HEK293 (cell line): ENCODE measurements at regions of chr19 and their contacts with region 1.

Region 1: DNA sequence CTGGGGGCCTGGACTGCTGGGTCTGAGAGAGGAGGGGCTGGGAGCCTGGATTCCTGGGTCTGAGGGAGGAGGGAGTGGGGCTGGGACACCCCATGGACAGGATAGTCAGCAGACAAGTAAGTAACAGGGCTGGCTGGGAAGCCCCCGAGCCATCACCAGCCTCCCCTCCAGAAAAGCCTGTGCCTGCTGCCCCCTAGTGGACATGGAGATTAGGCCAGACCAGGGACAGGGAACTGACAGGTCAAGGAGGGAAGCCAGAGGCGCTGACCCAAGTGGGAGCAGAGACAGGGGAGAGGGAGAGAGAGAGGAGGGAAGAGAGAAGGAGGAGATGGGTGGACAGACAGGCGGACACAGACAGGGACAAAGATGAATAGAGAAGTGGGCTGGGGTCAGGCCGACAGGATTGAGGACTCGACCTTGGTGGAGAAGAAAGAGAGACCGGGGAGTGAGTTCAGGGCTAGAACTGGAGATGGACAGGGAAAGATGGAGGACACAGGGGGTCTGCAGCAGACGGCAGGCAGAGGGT is 6.7 kb upstream of the ERFL start:
- H3K4me3 ChIP-seq: no peak overlapping the region
- H3K27ac ChIP-seq: no peak overlapping the region
- H3K4me1 ChIP-seq: peaks cover 7% of the 10 kb centered on the region
- CTCF ChIP-seq: peak; percentile 96

Region 2: GRCh38 chr19:41951686-41952172 is 16.8 kb after region 1 on chr19:
- CTCF ChIA-PET with region 1: interaction called, 18 read pairs
- POLR2A ChIA-PET with region 1: no interaction called
- H3K4me3 ChIP-seq: no peak overlapping the region
- H3K27ac ChIP-seq: no peak overlapping the region
- H3K4me1 ChIP-seq: no peaks in the 10 kb centered on the region
- CTCF ChIP-seq: peak; percentile 95